ENCODE measurements at regions of chr11 and their contacts with region 1.

Region 1: GRCh38 chr11:29159552-29160465 is 857.0 kb downstream of the KCNA4 start:
- DNase-seq: peak; percentile 20
- ATAC-seq: peak; percentile 94
- H3K4me3 ChIP-seq: no peak overlapping the region
- H3K27ac ChIP-seq: no peak overlapping the region
- H3K4me1 ChIP-seq: no peaks in the 10 kb centered on the region
- H3K27me3 ChIP-seq: no peaks in the 10 kb centered on the region
- CTCF ChIP-seq: peak; percentile 78
- EP300 ChIP-seq: no peak
- POLR2A ChIP-seq: no peak
- RAD21 ChIP-seq: 0 out of 2 replicates have a peak, but pooled peaks have one; percentile 25

Region 2: DNA sequence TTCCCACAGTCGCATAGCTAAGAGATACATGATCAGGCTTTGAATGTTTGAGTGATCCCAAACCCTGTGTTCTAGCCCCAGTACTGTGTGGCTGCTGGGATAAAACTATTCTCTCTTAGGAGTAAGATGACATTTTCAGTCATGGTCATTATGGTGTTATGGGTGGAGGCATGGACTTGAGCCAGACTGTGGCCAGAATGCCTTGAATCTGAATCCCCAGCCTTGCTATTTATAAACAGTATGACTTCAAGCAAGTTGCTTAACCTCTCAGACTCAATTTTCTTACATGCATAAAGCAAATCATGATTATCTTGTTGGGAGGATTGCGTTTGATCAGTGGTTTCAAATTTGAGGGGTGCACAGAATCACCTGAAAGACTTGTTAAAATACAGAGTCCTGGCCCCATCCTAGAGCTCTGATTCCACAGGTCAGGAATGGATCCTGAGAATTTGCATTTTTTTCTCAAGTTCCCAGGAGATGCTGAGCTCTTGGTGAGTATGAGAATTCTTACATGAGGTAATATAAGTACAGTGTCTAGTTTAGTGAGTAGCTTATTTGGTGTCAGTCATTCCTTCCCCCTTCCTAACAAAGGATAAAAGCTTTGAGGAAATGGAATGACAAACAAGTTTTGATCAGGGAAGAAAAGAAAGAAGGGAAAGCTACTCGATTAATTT is 479.9 kb before region 1 on chr11:
- CTCF ChIA-PET with region 1: no interaction called
- POLR2A ChIA-PET with region 1: no interaction called
- in situ Hi-C with region 1: no loop called
- intact Hi-C with region 1: loop called (anchors 10 kb)
- DNase-seq: no peak
- ATAC-seq: no peak
- H3K4me3 ChIP-seq: no peak overlapping the region
- H3K27ac ChIP-seq: no peak overlapping the region
- H3K4me1 ChIP-seq: no peaks in the 10 kb centered on the region
- H3K27me3 ChIP-seq: peaks cover 0 to 1% of the 10 kb centered on the region in 2 experiments; a peak in 1 of 5 replicates
- CTCF ChIP-seq: no peak
- EP300 ChIP-seq: no peak
- POLR2A ChIP-seq: no peak
- RAD21 ChIP-seq: no peak